ENCODE measurements at regions of chr4 and their contacts with region 1.

Region 1: DNA sequence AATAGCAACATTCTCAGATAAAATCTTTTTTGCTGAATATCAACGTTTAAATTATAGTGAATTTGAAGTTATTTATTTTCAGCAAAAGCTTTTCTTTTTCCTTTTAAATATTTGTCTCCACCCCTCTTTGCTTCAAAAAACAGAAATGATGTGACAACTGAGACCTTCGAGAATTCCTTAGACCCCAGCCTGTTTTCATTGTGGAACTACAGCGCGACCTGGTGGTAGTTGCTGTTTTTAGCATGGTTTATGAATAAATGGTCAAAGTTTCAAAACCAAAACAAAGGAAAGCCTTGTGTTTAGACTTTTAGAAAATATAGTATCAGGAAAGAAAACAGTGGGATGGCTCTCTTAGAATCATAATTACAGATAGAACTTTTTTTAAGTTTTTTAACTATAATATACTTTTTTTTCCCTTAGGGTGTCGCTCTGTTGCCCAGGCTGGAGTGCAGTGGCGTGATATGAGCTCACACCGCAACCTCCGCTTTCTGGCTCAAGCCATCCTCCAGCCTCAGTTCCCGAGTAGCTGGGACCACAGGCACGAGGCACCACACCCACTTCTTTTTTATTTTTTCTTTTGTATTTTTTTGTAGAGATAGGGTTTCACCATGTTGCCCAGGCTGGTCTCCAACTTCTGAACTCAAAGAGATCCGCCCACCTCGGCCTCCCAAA is 26.8 kb upstream of the TMEM184C start:
- DNase-seq: peak; percentile 59
- H3K4me3 ChIP-seq: no peak overlapping the region
- H3K27ac ChIP-seq: no peak overlapping the region
- H3K27me3 ChIP-seq: no peaks in the 10 kb centered on the region
- CTCF ChIP-seq: peak; percentile 85

Region 2: GRCh38 chr4:147096667-147097604 is 493.4 kb before region 1 on chr4:
- CTCF ChIA-PET with region 1: interaction called, 23 read pairs
- POLR2A ChIA-PET with region 1: no interaction called
- DNase-seq: peak; percentile 15
- H3K4me3 ChIP-seq: no peak overlapping the region
- H3K27ac ChIP-seq: no peak overlapping the region
- H3K27me3 ChIP-seq: peaks cover 2% of the 10 kb centered on the region
- CTCF ChIP-seq: peak; percentile 60

Region 3: DNA sequence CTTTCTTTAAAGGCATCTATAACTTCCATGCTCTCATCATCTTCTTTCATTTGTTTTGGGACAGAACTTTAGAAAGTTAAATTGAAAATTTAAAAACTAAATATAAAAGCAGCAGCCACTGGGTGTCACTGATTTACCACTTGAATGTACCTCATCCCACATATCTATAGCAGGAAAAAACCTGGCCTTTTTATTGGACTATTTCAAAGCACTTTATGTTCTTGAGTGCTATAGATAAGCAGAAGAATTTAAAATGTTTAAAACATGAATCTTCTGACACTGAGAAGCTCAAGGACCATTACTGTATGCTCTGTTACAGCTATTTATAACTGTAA is 479.4 kb before region 1 on chr4:
- CTCF ChIA-PET with region 1: interaction called, 106 read pairs
- POLR2A ChIA-PET with region 1: no interaction called
- DNase-seq: no peak
- H3K4me3 ChIP-seq: no peak overlapping the region
- H3K27ac ChIP-seq: no peak overlapping the region
- H3K27me3 ChIP-seq: no peaks in the 10 kb centered on the region
- CTCF ChIP-seq: no peak; the same call in 1 of the 2 replicates

Region 4: GRCh38 chr4:147518846-147519767 is 71.3 kb before region 1 on chr4:
- CTCF ChIA-PET with region 1: interaction called, 38 read pairs
- POLR2A ChIA-PET with region 1: no interaction called
- DNase-seq: peak; percentile 48
- H3K4me3 ChIP-seq: no peak overlapping the region
- H3K27ac ChIP-seq: no peak overlapping the region
- H3K27me3 ChIP-seq: no peaks in the 10 kb centered on the region
- CTCF ChIP-seq: peak; percentile 98